ENCODE measurements at regions of chr9 and their contacts with region 1.

Region 1: GRCh38 chr9:87290241-87291052 is 207.2 kb upstream of the DAPK1 start:
- DNase-seq: no peak
- ATAC-seq: no peak
- H3K4me3 ChIP-seq: no peak overlapping the region
- H3K27ac ChIP-seq: no peak overlapping the region
- H3K4me1 ChIP-seq: no peaks in the 10 kb centered on the region
- H3K27me3 ChIP-seq: no peaks in the 10 kb centered on the region

Region 2: GRCh38 chr9:87063871-87064270 is 226.6 kb before region 1 on chr9:
- intact Hi-C with region 1: loop called in 1 of 2 experiments (anchors 10 kb)
- DNase-seq: peak in 1 of 2 donors; percentile 53
- ATAC-seq: peak; percentile 79
- H3K4me3 ChIP-seq: no peak overlapping the region
- H3K27ac ChIP-seq: peak overlapping the region in 1 of 2 donors; percentile 47
- H3K4me1 ChIP-seq: peaks cover 0 to 3% of the 10 kb centered on the region in 2 donors
- H3K27me3 ChIP-seq: no peaks in the 10 kb centered on the region